Activated CD4-positive, alpha-beta memory T cell treated with anti-CD3 and anti-CD28 coated beads for 36 hours (primary cell): ENCODE measurements at regions of chr3 and their contacts with region 1.

Region 1: GRCh38 chr3:194682694-194683310 is 2.9 kb upstream of the FAM43A start:
- DNase-seq: peak; percentile 77
- H3K4me3 Mint-ChIP-seq: no peak overlapping the region
- H3K27ac Mint-ChIP-seq: no peak overlapping the region
- H3K4me1 Mint-ChIP-seq: peaks cover 39% of the 10 kb centered on the region
- H3K27me3 Mint-ChIP-seq: peaks cover 24% of the 10 kb centered on the region

Region 2: GRCh38 chr3:194769020-194769643 is 86.3 kb after region 1 on chr3:
- CTCF ChIA-PET with region 1: interaction called, 8 read pairs
- POLR2A ChIA-PET with region 1: no interaction called
- intact Hi-C with region 1: loop called (anchors 1 kb)
- DNase-seq: peak; percentile 96
- H3K4me3 Mint-ChIP-seq: peak overlapping the region; percentile 68
- H3K27ac Mint-ChIP-seq: peak overlapping the region; percentile 70
- H3K4me1 Mint-ChIP-seq: peaks cover 19% of the 10 kb centered on the region
- H3K27me3 Mint-ChIP-seq: peaks cover 5% of the 10 kb centered on the region

Region 3: DNA sequence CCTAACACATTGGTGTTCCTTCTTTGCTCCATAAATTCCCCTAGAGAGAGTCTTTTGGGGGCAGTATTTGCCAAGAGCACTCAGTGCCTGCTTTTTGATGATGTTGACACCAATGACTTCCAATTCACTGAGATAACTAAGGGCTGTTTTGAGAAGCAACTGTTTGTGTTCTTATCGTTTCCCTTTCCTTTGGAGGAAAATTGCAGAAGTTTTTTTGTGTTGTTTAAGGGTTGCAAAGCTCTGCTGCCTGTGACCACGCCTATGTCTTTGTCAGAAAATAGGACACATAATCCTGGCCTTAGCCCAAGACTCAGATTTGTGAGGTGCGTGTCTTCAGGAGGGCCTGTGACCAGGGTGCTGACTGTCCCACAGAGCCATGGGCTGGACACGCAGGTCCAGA is 102.5 kb after region 1 on chr3:
- CTCF ChIA-PET with region 1: no interaction called
- POLR2A ChIA-PET with region 1: no interaction called
- intact Hi-C with region 1: no loop called
- DNase-seq: no peak
- H3K4me3 Mint-ChIP-seq: no peak overlapping the region
- H3K27ac Mint-ChIP-seq: no peak overlapping the region
- H3K4me1 Mint-ChIP-seq: no peaks in the 10 kb centered on the region
- H3K27me3 Mint-ChIP-seq: peaks cover 4% of the 10 kb centered on the region

Region 4: DNA sequence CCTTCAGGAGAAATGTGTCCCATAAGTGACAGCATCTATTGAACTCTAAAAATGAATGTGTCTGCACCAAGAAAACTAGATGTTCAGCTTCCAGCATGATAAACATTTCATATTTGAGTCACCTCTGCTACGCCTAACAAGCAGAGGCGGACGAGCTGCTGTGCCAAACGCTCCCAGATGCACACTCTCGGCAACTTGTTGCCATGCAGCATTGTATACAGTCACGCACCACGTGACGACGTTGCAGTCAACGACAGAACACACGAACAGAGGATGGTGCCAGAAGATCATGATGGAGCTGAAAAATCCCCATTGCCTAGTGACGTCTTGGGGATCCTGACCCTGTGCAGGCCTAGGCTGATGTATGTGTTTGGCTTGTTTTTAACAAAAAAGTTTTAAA is 450.7 kb after region 1 on chr3:
- CTCF ChIA-PET with region 1: interaction called, 12 read pairs
- POLR2A ChIA-PET with region 1: interaction called, 4 read pairs
- intact Hi-C with region 1: loop called (anchors 2 kb)
- DNase-seq: peak; percentile 90
- H3K4me3 Mint-ChIP-seq: no peak overlapping the region
- H3K27ac Mint-ChIP-seq: peak overlapping the region; percentile 61
- H3K4me1 Mint-ChIP-seq: peaks cover 44% of the 10 kb centered on the region
- H3K27me3 Mint-ChIP-seq: no peaks in the 10 kb centered on the region

Region 5: GRCh38 chr3:195259475-195260279 is 576.9 kb after region 1 on chr3:
- CTCF ChIA-PET with region 1: interaction called, 22 read pairs
- POLR2A ChIA-PET with region 1: interaction called, 7 read pairs
- intact Hi-C with region 1: loop called (anchors 1 kb)
- DNase-seq: peak; percentile 90
- H3K4me3 Mint-ChIP-seq: peak overlapping the region; percentile 57
- H3K27ac Mint-ChIP-seq: peak overlapping the region; percentile 42
- H3K4me1 Mint-ChIP-seq: peaks cover 14% of the 10 kb centered on the region
- H3K27me3 Mint-ChIP-seq: no peaks in the 10 kb centered on the region

Region 6: DNA sequence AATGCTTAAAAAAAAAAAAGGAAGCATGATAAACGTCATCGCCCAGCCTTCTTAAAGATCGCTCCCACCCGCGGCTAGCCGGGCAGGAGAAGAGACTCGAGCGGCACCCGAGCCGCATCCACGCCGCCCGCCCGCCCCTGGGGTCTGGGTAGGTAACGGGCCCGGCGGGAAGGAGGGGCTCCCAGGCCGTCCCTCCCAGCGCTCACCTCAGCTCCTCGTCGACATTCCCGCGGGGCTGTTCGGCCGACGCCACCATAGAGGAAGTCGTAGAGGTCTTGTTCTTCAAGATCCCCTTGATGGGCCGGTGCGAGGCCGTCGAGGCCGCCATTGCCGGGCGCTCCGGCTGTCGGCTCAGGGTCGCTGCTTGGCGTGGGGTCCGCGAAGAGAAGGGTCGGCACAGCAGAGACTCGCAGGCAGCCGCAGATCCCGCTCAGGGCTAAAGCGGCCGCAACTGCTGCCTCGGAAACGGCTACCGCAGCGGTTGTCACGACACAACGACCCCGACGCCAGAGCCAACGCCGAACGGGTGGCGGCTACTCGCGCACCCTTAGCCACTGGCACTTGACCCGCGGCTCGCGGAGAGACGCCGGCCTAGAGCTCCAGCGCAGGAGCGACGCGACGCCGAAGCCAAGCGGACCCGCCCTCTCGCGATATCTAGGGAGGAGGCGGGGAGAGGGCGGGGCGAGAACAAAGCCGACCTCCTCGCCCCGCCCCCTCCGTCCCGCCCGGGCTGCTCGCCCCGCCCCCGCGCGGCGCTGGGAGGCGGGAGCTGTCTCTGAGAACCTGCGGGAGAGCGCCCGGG is 860.1 kb after region 1 on chr3 and contains the start of gene PPP1R2:
- CTCF ChIA-PET with region 1: no interaction called
- POLR2A ChIA-PET with region 1: no interaction called
- intact Hi-C with region 1: loop called (anchors 5 kb)
- DNase-seq: peak; percentile 93
- H3K4me3 Mint-ChIP-seq: peak within 1 kb of the TSS; percentile 90
- H3K27ac Mint-ChIP-seq: peak within 1 kb of the TSS; percentile 91
- H3K4me1 Mint-ChIP-seq: peaks cover 59% of the 10 kb centered on the region
- H3K27me3 Mint-ChIP-seq: no peaks in the 10 kb centered on the region
- total RNA-seq, gene PPP1R2: 101 to 105 TPM